Heart right ventricle (tissue), 16 donors: ENCODE measurements at regions of chr16 and their contacts with region 1.

Region 1: DNA sequence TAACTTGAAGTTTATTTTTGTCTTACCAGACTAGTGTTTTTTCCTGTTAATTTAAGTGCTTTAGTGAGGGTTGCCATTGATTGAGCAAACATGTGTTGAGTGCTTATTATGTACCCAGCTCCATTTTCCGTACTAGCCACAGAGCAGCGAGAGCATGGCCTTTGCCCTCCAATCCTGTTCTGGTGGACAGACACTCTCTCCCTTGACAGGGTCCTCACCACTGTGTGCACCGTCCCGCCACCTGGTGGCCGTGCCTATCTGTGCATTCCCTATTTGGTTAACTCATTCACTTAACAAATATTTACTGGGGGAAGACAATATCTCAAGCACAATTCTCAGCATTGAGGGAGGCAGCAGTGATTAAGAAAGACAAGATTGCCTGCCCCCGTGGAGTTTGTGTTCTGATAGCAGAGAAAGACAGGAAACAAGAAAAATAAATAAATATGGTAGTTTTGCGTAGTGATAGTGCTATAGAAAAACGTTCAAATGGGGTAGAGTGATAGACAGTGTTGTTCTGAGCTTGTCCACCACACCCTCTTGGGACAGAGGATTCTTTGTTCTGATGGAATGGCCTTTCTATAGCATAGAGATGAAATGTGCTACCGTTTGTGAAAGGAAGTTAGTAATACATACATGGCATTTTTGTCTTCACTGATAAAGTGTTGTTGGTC is 13.0 kb downstream of the CDH13 start:
- DNase-seq: peak; percentile 55 to 65
- ATAC-seq: peak; percentile 41 to 77 (median 62)
- H3K4me3 ChIP-seq: no peak overlapping the region
- H3K27ac ChIP-seq: peak overlapping the region in 3 of 10 donors; percentile 58 to 76 (median 71)
- H3K4me1 ChIP-seq: peaks cover 4 to 73% (median 33%) of the 10 kb centered on the region in 9 donors
- H3K27me3 ChIP-seq: no peaks in the 10 kb centered on the region
- CTCF ChIP-seq: peak; percentile 57 to 82 (median 69)

Region 2: GRCh38 chr16:82699711-82700495 is 60.1 kb after region 1 on chr16:
- intact Hi-C with region 1: loop called in 4 of 10 experiments (anchors 5 kb)
- DNase-seq: peak in 1 of 2 donors; percentile 53
- ATAC-seq: peak; percentile 59 to 82 (median 76)
- H3K4me3 ChIP-seq: no peak overlapping the region
- H3K27ac ChIP-seq: peak overlapping the region; percentile 54 to 93 (median 84)
- H3K4me1 ChIP-seq: peaks cover 9 to 67% (median 50%) of the 10 kb centered on the region in 9 donors
- H3K27me3 ChIP-seq: no peaks in the 10 kb centered on the region
- CTCF ChIP-seq: no peak

Region 3: DNA sequence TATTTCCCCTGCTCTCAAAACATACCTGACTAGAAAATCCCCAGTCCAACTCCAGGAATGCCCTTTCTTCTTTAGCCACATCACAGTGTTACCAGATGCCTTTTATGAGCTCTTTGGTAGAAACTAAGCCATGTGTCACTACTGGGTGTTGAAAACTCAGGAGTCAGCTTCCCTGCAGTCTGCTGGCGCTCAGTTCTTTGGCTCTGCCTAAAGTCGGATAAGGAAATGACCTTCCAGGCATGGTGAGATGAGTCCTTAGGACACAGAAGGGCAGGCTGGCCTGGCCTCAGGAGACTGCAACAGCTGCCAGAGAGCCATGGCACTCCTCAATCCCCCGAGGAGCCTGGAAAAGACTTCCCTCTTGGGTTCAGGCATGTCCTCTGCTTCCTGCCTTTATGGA is 76.0 kb after region 1 on chr16:
- intact Hi-C with region 1: no loop called
- DNase-seq: peak; percentile 59 to 62
- ATAC-seq: peak; percentile 80 to 96 (median 91)
- H3K4me3 ChIP-seq: peak overlapping the region in 3 of 10 donors; percentile 12 to 25 (median 24)
- H3K27ac ChIP-seq: peak overlapping the region; percentile 54 to 86 (median 76)
- H3K4me1 ChIP-seq: peaks cover 8 to 47% (median 36%) of the 10 kb centered on the region in 9 donors
- H3K27me3 ChIP-seq: no peaks in the 10 kb centered on the region
- CTCF ChIP-seq: no peak

Region 4: DNA sequence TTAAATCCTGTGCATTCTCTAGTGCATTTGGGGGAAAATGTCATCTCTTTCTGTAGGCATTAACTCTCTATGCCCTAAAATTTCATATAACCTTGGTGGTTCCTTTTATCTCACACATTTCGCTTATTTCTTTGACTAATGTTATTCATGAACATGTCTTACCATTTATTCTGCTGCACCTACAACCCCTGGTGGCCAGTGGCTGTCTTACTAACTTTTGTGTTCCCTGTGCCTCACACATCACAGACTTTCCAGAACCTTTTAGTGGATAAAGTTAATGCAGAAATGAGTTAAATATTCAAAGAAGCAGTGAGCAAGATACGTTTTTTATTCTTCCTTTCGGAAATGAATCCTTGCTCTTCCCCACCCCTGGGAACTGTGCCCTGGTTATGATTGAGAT is 98.9 kb after region 1 on chr16:
- intact Hi-C with region 1: loop called in 5 of 10 experiments (anchors 5 to 10 kb)
- DNase-seq: no peak
- ATAC-seq: no peak
- H3K4me3 ChIP-seq: no peak overlapping the region
- H3K27ac ChIP-seq: peak overlapping the region in 6 of 10 donors; percentile 53 to 88 (median 86)
- H3K4me1 ChIP-seq: peaks cover 6 to 51% (median 36%) of the 10 kb centered on the region in 9 donors
- H3K27me3 ChIP-seq: no peaks in the 10 kb centered on the region
- CTCF ChIP-seq: peak in 8 of 9 donors; percentile 10 to 61 (median 42)

Region 5: DNA sequence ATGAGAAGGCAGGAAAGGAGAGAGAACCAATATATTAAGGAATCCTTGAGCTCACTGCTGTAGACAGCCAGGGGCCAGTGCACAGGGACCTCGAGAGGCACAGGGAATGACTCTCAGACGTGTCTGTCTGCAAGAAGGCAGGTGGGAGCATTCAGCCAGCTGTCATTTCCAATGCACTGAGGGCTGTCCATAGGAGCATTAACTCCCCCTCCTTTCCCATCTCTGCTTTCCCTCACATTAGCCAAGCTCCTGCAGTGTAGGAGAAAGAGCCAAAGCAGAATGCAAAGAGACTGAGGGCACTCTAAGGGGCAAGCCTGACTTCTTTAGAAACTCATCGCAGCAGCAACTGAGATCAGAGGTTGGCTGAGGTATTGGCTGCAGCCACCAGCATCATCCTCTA is 205.3 kb after region 1 on chr16:
- intact Hi-C with region 1: loop called in 1 of 10 experiments (anchors 10 kb)
- DNase-seq: no peak
- ATAC-seq: peak in 1 of 8 donors; percentile 11
- H3K4me3 ChIP-seq: no peak overlapping the region
- H3K27ac ChIP-seq: no peak overlapping the region
- H3K4me1 ChIP-seq: peaks cover 0 to 36% (median 7%) of the 10 kb centered on the region in 9 donors
- H3K27me3 ChIP-seq: no peaks in the 10 kb centered on the region
- CTCF ChIP-seq: no peak